CD8-positive, alpha-beta T cell (primary cell): ENCODE measurements at regions of chr17 and their contacts with region 1.

Region 1: DNA sequence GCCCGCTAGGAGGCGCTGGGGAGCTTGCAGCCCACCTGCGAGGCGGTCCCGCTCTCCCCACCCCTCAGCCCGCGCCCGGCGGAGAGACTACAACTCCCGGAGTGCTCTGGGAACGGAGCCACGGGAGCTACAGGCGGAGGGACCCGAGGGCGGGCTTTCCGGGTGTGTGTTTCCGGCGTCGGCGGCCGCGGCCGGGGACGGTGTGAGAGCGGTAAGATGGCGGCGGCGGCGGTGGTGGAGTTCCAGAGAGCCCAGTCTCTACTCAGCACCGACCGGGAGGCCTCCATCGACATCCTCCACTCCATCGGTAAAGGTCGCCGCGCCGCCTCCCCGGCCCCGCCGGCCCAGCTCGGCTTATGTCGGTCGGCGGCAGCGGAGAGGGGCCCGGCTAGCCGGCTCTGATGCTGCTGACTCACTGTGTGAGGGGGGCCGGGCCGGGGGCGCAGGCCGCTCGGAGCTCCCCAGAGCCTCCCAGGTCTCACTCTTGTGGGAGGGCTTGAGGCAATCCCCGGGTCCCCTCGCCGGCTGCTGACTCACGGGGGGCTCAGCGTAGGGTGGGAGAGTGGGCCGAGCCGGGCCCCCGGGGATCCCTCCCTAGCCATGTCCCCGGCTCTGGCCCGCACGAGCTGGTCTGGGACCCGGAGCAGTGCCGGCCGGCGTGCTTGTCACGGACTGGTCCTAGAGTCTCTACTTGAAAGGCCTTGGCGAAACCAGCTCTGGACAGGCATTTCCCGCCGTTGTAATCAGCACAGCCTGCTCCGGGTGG is at the start of gene PSMD11:
- DNase-seq: peak; percentile 97 to 99 (median 99)
- ATAC-seq: peak; percentile 97
- H3K4me3 ChIP-seq: peak within 1 kb of the TSS; percentile 71 to 97
- H3K4me3 Mint-ChIP-seq: peak within 1 kb of the TSS; percentile 85
- H3K27ac ChIP-seq: peak within 1 kb of the TSS; percentile 71 to 72
- H3K27ac Mint-ChIP-seq: peak within 1 kb of the TSS; percentile 86
- H3K4me1 ChIP-seq: peaks cover 31% of the 10 kb centered on the region
- H3K4me1 Mint-ChIP-seq: peaks cover 36% of the 10 kb centered on the region
- H3K27me3 ChIP-seq: no peaks in the 10 kb centered on the region
- H3K27me3 Mint-ChIP-seq: no peaks in the 10 kb centered on the region
- CTCF ChIP-seq: peak; percentile 95
- total RNA-seq, gene PSMD11: 69.9 to 72.6 TPM

Region 2: DNA sequence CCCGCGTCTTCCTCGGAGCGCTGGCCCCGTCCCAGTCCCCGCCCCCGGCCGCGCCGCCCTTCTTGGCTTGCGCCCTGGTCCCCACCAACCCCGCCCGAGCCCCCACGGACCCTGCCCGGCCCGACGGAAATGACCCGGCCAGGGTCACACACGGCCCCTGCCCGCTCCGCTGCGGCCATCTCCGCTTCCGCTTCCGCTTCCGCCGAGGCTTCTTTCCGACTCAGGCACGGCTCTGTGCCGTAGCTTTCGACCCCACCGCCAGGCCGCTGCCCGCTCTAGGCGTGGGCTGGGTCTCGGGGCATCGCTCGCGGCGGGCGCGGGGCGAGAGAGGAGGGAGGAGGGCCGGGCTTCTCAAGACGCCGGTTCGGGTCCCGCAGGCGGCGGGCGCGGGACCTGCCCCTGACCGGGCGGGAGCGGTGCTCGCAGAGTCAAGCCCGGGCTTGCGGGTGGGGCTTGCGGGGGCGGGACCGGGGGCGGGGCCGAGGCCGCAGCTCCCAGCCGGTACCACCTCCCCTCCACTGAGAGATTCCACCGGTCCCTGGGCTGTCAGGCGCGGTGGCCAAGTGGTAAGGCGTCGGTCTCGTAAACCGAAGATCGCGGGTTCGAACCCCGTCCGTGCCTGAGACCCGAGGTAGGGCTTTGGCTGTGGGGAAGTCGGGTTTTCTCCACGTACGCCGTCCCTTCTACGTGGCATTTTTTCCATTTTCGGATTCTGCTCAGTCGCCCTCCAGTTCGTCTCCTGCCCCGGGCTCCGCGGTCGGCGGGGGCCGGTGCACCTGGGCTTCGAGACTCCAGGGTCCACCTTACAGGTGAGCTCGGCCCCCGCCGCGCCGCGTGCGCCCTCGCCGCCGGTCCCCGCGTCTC is 894.7 kb before region 1 on chr17:
- CTCF ChIA-PET with region 1: no interaction called
- POLR2A ChIA-PET with region 1: no interaction called
- intact Hi-C with region 1: loop called in 1 of 2 experiments (anchors 10 kb)
- DNase-seq: peak; percentile 73 to 95 (median 88)
- ATAC-seq: peak; percentile 89
- H3K4me3 ChIP-seq: peak overlapping the region; percentile 73 to 87
- H3K4me3 Mint-ChIP-seq: peak overlapping the region; percentile 87
- H3K27ac ChIP-seq: peak overlapping the region; percentile 56 to 75
- H3K27ac Mint-ChIP-seq: peak overlapping the region; percentile 64
- H3K4me1 ChIP-seq: peaks cover 17% of the 10 kb centered on the region
- H3K4me1 Mint-ChIP-seq: peaks cover 16% of the 10 kb centered on the region
- H3K27me3 ChIP-seq: no peaks in the 10 kb centered on the region
- H3K27me3 Mint-ChIP-seq: no peaks in the 10 kb centered on the region
- CTCF ChIP-seq: no peak

Region 3: GRCh38 chr17:32341857-32342602 is 102.5 kb before region 1 on chr17 and contains the start of gene C17orf75:
- CTCF ChIA-PET with region 1: interaction called, 3 read pairs
- POLR2A ChIA-PET with region 1: no interaction called
- intact Hi-C with region 1: loop called in 1 of 2 experiments (anchors 2 kb)
- DNase-seq: peak; percentile 64 to 89 (median 79)
- ATAC-seq: peak; percentile 90
- H3K4me3 ChIP-seq: peak within 1 kb of the TSS; percentile 48 to 76
- H3K4me3 Mint-ChIP-seq: peak within 1 kb of the TSS; percentile 92
- H3K27ac ChIP-seq: peak within 1 kb of the TSS; percentile 49 to 84
- H3K27ac Mint-ChIP-seq: peak within 1 kb of the TSS; percentile 92
- H3K4me1 ChIP-seq: peaks cover 21% of the 10 kb centered on the region
- H3K4me1 Mint-ChIP-seq: peaks cover 24% of the 10 kb centered on the region
- H3K27me3 ChIP-seq: no peaks in the 10 kb centered on the region
- H3K27me3 Mint-ChIP-seq: no peaks in the 10 kb centered on the region
- CTCF ChIP-seq: no peak
- total RNA-seq, gene C17orf75: 12.5 to 14.0 TPM

Region 4: DNA sequence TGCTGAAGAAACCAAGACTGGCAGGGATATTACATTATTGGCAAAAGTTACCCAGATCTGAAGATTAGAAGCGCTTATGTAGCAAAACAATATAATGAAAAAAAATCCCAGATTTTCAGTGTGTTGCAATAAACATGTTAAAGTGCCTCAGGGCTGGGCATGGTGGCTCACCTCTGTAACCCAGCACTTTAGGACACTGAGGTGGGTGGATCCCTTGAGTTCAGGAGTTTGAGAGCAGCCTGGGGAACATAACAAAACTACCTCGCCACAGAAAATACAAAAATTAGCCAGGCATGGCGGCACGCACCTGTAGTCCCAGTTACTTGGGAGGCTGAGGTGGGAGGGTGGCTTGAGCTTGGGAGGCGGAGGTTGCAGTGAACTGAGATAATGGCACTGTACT is 87.7 kb before region 1 on chr17:
- CTCF ChIA-PET with region 1: no interaction called
- POLR2A ChIA-PET with region 1: no interaction called
- intact Hi-C with region 1: no loop called
- DNase-seq: no peak
- ATAC-seq: no peak
- H3K4me3 ChIP-seq: no peak overlapping the region
- H3K4me3 Mint-ChIP-seq: peak overlapping the region; percentile 26
- H3K27ac ChIP-seq: no peak overlapping the region
- H3K27ac Mint-ChIP-seq: no peak overlapping the region
- H3K4me1 ChIP-seq: peaks cover 65% of the 10 kb centered on the region
- H3K4me1 Mint-ChIP-seq: peaks cover 64% of the 10 kb centered on the region
- H3K27me3 ChIP-seq: no peaks in the 10 kb centered on the region
- H3K27me3 Mint-ChIP-seq: no peaks in the 10 kb centered on the region
- CTCF ChIP-seq: no peak

Region 5: GRCh38 chr17:32396343-32396742 is 48.1 kb before region 1 on chr17:
- CTCF ChIA-PET with region 1: no interaction called
- POLR2A ChIA-PET with region 1: no interaction called
- intact Hi-C with region 1: loop called in 1 of 2 experiments (anchors 5 kb)
- DNase-seq: no peak
- ATAC-seq: no peak
- H3K4me3 ChIP-seq: no peak overlapping the region
- H3K4me3 Mint-ChIP-seq: no peak overlapping the region
- H3K27ac ChIP-seq: no peak overlapping the region
- H3K27ac Mint-ChIP-seq: no peak overlapping the region
- H3K4me1 ChIP-seq: peaks cover 7% of the 10 kb centered on the region
- H3K4me1 Mint-ChIP-seq: peaks cover 15% of the 10 kb centered on the region
- H3K27me3 ChIP-seq: no peaks in the 10 kb centered on the region
- H3K27me3 Mint-ChIP-seq: no peaks in the 10 kb centered on the region
- CTCF ChIP-seq: no peak

Region 6: GRCh38 chr17:32877164-32877764 is 432.8 kb after region 1 on chr17:
- CTCF ChIA-PET with region 1: interaction called, 3 read pairs
- POLR2A ChIA-PET with region 1: no interaction called
- intact Hi-C with region 1: loop called (anchors 1 to 5 kb)
- DNase-seq: peak; percentile 85 to 97 (median 92)
- ATAC-seq: peak; percentile 94
- H3K4me3 ChIP-seq: peak overlapping the region; percentile 43 to 76
- H3K4me3 Mint-ChIP-seq: peak overlapping the region; percentile 80
- H3K27ac ChIP-seq: peak overlapping the region; percentile 8 to 66
- H3K27ac Mint-ChIP-seq: peak overlapping the region; percentile 88
- H3K4me1 ChIP-seq: peaks cover 6% of the 10 kb centered on the region
- H3K4me1 Mint-ChIP-seq: peaks cover 13% of the 10 kb centered on the region
- H3K27me3 ChIP-seq: peaks cover 0 to 3% of the 10 kb centered on the region in 2 experiments
- H3K27me3 Mint-ChIP-seq: peaks cover 7% of the 10 kb centered on the region
- CTCF ChIP-seq: peak; percentile 74